ENCODE measurements at regions of chr1 and their contacts with region 1.

Region 1: GRCh38 chr1:77779529-77780281 is at the start of gene MIGA1:
- DNase-seq: peak; percentile 77
- H3K4me3 Mint-ChIP-seq: peak within 1 kb of the TSS; percentile 98
- H3K27ac Mint-ChIP-seq: peak within 1 kb of the TSS; percentile 87
- H3K4me1 Mint-ChIP-seq: peaks cover 39% of the 10 kb centered on the region
- H3K27me3 Mint-ChIP-seq: peaks cover 4% of the 10 kb centered on the region
- total RNA-seq, gene MIGA1: 8.0 and 8.6 TPM in 2 replicates

Region 2: GRCh38 chr1:75785983-75786853 is 1993.5 kb before region 1 on chr1 and contains the start of gene RABGGTB:
- intact Hi-C with region 1: loop called (anchors 1 kb)
- DNase-seq: peak; percentile 93
- H3K4me3 Mint-ChIP-seq: peak within 1 kb of the TSS; percentile 97
- H3K27ac Mint-ChIP-seq: peak within 1 kb of the TSS; percentile 99
- H3K4me1 Mint-ChIP-seq: peaks cover 46% of the 10 kb centered on the region
- H3K27me3 Mint-ChIP-seq: peaks cover 1% of the 10 kb centered on the region
- total RNA-seq, gene RABGGTB: 233 and 240 TPM in 2 replicates

Region 3: GRCh38 chr1:77100870-77101269 is 678.8 kb before region 1 on chr1:
- intact Hi-C with region 1: no loop called
- DNase-seq: no peak
- H3K4me3 Mint-ChIP-seq: no peak overlapping the region
- H3K27ac Mint-ChIP-seq: no peak overlapping the region
- H3K4me1 Mint-ChIP-seq: no peaks in the 10 kb centered on the region
- H3K27me3 Mint-ChIP-seq: no peaks in the 10 kb centered on the region

Region 4: GRCh38 chr1:77759071-77760028 is 20.4 kb before region 1 on chr1 and contains the start of gene USP33:
- intact Hi-C with region 1: loop called (anchors 1 kb)
- DNase-seq: peak; percentile 89
- H3K4me3 Mint-ChIP-seq: peak within 1 kb of the TSS; percentile 92
- H3K27ac Mint-ChIP-seq: peak within 1 kb of the TSS; percentile 88
- H3K4me1 Mint-ChIP-seq: peaks cover 28% of the 10 kb centered on the region
- H3K27me3 Mint-ChIP-seq: peaks cover 2% of the 10 kb centered on the region
- total RNA-seq, gene USP33: 49.9 and 53.1 TPM in 2 replicates